Left cardiac atrium (tissue), 4 donors: ENCODE measurements at regions of chr6 and their contacts with region 1.

Region 1: DNA sequence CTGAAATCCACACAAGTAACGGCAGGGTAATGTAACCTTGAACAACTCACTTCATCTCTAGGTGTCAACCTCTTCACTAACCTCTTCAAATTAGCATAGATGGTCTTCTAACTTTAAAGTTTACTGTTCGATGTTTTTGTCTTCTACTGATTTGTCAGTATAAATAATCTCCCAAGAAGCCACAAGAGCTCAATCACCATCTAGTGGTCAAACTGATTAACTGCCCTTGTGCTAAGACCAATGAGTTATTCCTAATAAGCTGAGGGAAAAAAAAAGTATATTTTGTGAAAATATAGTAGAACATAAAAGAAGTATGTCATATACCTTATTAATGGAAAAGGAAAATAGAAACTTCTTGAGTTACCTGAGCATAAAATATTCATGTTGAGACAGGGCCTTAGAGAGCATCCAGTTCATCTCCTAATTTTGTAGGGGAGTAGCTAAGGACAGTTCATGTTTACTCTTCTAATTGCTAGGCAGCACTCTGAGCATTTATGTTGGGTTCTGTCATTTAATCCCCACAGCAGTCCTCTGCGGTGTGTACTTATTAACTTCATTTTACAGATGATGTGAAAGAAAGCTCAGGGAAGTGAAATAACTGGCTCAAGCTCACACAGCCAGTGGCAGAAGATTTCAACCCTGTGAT is 317.1 kb downstream of the ESR1 start:
- DNase-seq: no peak
- ATAC-seq: peak; percentile 46 to 49

Region 2: DNA sequence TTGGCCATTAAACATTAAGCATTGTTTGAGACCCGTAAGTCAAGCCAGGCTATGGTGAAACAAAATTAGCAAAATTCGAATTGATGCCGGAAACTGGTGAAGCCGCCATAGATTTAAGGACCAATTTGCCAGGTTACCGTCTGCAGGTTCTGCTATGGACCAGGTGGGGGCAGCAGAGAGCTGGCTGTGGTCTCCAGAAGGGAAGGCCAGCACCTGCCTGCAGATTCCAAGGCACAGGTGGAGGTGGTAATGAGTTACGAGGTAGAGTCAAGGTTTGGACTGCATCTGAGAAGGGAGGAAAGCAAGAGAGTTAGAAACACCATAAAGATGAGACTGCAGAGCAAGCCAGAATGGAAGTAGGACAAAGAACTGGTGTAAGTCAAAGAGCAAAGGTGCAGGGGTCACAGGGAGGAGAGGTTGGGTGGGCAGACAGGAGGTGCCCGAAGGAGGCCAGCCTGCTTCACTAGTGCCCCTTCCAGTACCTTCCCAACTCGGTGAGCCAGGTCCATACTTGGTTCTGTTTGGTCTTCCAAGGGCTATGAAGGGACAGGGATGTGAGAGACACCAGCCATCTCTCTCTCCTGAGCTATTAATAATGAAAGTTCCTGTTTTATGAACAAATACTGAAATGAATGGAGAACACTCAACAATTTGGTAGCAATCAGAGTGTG is 448.7 kb before region 1 on chr6:
- intact Hi-C with region 1: loop called in 1 of 2 experiments (anchors 10 kb)
- DNase-seq: no peak
- ATAC-seq: peak in 1 of 2 donors; percentile 54

Region 3: GRCh38 chr6:151690768-151691562 is 433.6 kb before region 1 on chr6:
- intact Hi-C with region 1: no loop called
- DNase-seq: no peak
- ATAC-seq: peak; percentile 61 to 83